Gastrocnemius medialis (tissue), 4 donors: ENCODE measurements at regions of chr3 and their contacts with region 1.

Region 1: GRCh38 chr3:135166266-135166825 is 371.3 kb downstream of the EPHB1 start:
- DNase-seq: no peak
- ATAC-seq: no peak
- H3K4me3 ChIP-seq: no peak overlapping the region
- H3K27ac ChIP-seq: no peak overlapping the region
- H3K4me1 ChIP-seq: peaks cover 11 to 13% of the 10 kb centered on the region in 2 donors
- H3K27me3 ChIP-seq: no peaks in the 10 kb centered on the region
- CTCF ChIP-seq: no peak
- POLR2A ChIP-seq: no peak

Region 2: DNA sequence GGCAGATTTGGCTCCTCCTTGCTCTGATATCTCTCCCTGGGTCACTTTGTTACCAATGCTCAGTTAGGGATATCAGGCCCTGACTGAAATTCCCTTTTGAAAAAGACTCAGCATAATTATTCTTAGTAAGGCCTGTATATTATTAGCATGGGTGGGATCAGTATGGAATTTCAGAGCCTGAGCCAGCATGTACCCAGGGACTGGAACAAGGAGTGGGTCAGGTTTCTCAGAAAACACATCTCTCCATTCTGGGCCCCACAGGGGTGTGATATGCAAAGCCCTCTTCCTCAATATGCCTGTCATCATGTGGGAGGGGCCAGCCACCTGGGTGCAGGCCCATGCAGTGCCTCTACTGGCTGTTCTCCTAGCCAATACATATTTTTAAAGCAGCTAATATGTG is 52.0 kb after region 1 on chr3:
- in situ Hi-C with region 1: no loop called
- intact Hi-C with region 1: loop called (anchors 5 kb)
- DNase-seq: peak; percentile 86 to 91
- ATAC-seq: peak; percentile 89 to 92
- H3K4me3 ChIP-seq: no peak overlapping the region
- H3K27ac ChIP-seq: peak overlapping the region; percentile 84 to 95 (median 90)
- H3K4me1 ChIP-seq: peaks cover 35 to 43% of the 10 kb centered on the region in 2 donors
- H3K27me3 ChIP-seq: no peaks in the 10 kb centered on the region
- CTCF ChIP-seq: peak in 2 of 5 experiments; percentile 29 to 40
- POLR2A ChIP-seq: peak in 1 of 2 donors; percentile 42

Region 3: GRCh38 chr3:135268941-135269532 is 102.7 kb after region 1 on chr3:
- in situ Hi-C with region 1: no loop called
- intact Hi-C with region 1: no loop called
- DNase-seq: no peak
- ATAC-seq: no peak
- H3K4me3 ChIP-seq: no peak overlapping the region
- H3K27ac ChIP-seq: no peak overlapping the region
- H3K4me1 ChIP-seq: peaks cover 13 to 14% of the 10 kb centered on the region in 2 donors
- H3K27me3 ChIP-seq: no peaks in the 10 kb centered on the region
- CTCF ChIP-seq: no peak
- POLR2A ChIP-seq: no peak